Uterus (tissue), 4 donors: ENCODE measurements at regions of chr1 and their contacts with region 1.

Region 1: DNA sequence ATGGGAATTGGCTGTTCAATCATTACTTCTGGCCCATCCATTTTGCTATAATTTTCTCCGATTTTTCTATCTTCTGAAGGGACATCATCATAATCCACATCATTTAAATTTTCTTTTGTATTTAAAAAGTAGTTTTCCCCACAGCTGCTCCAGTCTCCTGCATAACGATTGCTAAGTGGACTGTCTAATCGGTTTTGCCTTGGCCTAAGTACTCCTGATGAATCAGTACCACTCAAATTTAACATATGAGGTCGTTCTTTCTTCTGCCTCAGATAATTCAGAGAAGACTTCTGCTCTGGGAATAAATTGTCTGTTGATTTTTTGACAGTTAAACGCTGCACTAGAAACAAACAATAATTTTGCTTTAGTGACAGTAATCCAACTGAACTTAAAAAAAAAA is 41.9 kb downstream of the SYDE2 start:
- DNase-seq: no peak
- H3K4me3 ChIP-seq: no peak overlapping the region
- H3K27ac ChIP-seq: no peak overlapping the region
- H3K4me1 ChIP-seq: peaks cover 0 to 6% of the 10 kb centered on the region in 2 donors
- H3K27me3 ChIP-seq: no peaks in the 10 kb centered on the region
- CTCF ChIP-seq: no peak
- POLR2A ChIP-seq: no peak

Region 2: DNA sequence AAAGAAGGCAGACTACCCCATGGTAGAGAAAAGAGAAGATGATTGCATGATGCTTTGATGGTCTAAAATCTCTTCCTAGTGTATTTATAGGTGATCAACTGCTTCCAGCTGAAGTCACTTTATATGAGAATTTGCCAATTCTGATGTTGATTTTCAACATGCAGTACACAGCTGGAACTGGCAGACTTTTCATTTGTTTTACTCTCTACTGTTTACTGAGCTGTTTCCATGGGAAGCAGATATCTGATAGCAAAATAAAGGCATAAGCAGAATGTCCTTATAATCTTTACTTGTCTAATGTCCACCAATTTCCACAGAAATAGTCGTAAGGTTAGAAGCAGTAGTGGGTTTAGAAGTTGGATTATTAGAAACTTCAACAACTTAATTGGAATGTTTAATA is 33.0 kb before region 1 on chr1:
- intact Hi-C with region 1: loop called (anchors 2 kb)
- DNase-seq: no peak
- H3K4me3 ChIP-seq: no peak overlapping the region
- H3K27ac ChIP-seq: no peak overlapping the region
- H3K4me1 ChIP-seq: no peaks in the 10 kb centered on the region
- H3K27me3 ChIP-seq: no peaks in the 10 kb centered on the region
- CTCF ChIP-seq: no peak
- POLR2A ChIP-seq: no peak